ENCODE measurements at regions of chr4 and their contacts with region 1.

Region 1: GRCh38 chr4:13783800-13784411 is 156.4 kb upstream of the BOD1L1 start:
- DNase-seq: peak; percentile 24 to 95 (median 72)

Region 2: GRCh38 chr4:13849778-13850177 is 65.9 kb after region 1 on chr4:
- intact Hi-C with region 1: loop called (anchors 10 kb)
- DNase-seq: no peak